Activated T-helper 1 cell treated with anti-CD3 and anti-CD28 coated beads, Interleukin-12 subunit alpha, Interleukin-12 subunit beta, Interleukin-2, Interleukin-4 antibody, amounts not matched to agents 30 ng/mL and 10 ng/mL and 1 ng/mL, durations not matched to agents 14 hours and 24 hours and 36 hours (primary cell): ENCODE measurements at regions of chr19 and their contacts with region 1.

Region 1: DNA sequence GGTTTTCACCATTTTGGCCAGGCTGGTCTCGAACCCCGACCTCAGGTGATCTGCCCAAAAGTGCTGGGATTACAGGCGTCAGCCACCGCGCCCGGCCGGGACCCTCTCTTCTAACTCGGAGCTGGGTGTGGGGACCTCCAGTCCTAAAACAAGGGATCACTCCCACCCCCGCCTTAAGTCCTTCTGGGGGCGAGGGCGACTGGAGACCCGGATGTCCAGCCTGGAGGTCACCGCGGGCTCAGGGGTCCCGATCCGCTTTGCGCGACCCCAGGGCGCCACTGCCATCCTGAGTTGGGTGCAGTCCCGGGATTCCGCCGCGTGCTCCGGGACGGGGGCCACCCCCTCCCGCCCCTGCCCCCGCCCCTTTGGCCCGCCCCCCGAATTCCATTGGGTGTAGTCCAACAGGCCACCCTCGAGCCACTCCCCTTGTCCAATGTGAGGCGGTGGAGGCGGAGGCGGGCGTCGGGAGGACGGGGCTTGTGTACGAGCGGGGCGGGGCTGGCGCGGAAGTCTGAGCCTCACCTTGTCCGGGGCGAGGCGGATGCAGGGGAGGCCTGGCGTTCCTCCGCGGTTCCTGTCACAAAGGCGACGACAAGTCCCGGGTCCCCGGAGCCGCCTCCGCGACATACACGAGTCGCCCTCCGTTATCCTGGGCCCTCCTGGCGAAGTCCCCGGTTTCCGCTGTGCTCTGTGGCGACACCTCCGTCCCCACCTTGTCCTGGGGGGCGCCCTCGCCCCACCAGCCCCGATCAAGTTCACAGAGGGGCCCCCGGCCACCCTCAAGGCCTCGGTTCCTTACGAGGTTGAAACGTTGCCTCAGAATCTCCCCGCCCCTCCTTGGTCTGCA is 1.0 kb downstream of the LDLR start:
- DNase-seq: peak; percentile 97
- H3K4me3 Mint-ChIP-seq: peak overlapping the region; percentile 98
- H3K27ac Mint-ChIP-seq: peak overlapping the region; percentile 99
- H3K4me1 Mint-ChIP-seq: peaks cover 45% of the 10 kb centered on the region
- H3K27me3 Mint-ChIP-seq: no peaks in the 10 kb centered on the region

Region 2: DNA sequence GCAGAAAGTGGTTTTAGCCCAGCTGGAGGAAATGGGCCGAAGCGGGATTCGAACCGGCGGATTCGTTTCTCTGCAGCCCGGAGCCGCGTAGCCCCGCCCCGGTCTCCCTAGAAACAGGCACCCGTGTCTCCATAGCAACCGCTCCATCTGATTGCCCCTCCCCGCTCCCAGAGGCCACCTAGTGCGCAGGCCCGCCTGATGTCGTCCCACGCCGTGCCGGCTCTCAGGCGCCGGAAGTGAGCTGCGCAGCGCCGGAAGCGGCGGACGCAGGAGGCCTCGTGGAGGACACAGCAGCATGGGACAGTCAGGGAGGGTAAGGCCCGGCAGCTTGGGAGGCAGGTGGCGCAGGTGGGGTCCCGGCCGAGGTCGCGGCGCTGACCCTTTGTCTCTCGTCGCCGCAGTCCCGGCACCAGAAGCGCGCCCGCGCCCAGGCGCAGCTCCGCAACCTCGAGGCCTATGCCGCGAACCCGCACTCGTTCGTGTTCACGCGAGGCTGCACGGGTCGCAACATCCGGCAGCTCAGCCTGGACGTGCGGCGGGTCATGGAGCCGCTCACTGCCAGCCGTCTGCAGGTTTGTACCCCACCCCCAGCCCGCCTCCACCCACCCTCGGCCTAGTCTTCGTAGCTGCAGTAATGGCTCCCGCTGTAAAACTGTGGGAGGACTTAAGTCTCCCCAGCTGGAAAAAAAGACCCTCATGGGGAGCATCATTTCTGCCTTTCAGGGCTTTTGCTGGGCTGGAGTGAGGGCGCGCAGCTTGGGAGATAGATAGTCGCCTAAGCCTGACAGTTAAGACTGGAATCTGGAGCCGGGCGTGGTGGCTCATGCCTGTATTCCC is 984.0 kb before region 1 on chr19 and contains the start of gene PPAN:
- intact Hi-C with region 1: loop called (anchors 10 kb)
- DNase-seq: peak; percentile 97
- H3K4me3 Mint-ChIP-seq: peak within 1 kb of the TSS; percentile 97
- H3K27ac Mint-ChIP-seq: peak within 1 kb of the TSS; percentile 99
- H3K4me1 Mint-ChIP-seq: peaks cover 60% of the 10 kb centered on the region
- H3K27me3 Mint-ChIP-seq: peaks cover 1% of the 10 kb centered on the region
- total RNA-seq, gene PPAN: 234 and 250 TPM in 2 replicates

Region 3: GRCh38 chr19:10533646-10534386 is 556.5 kb before region 1 on chr19:
- intact Hi-C with region 1: no loop called
- DNase-seq: no peak
- H3K4me3 Mint-ChIP-seq: no peak overlapping the region
- H3K27ac Mint-ChIP-seq: no peak overlapping the region
- H3K4me1 Mint-ChIP-seq: no peaks in the 10 kb centered on the region
- H3K27me3 Mint-ChIP-seq: peaks cover 26% of the 10 kb centered on the region

Region 4: GRCh38 chr19:10717356-10718204 is 372.7 kb before region 1 on chr19 and contains the start of gene DNM2:
- intact Hi-C with region 1: loop called (anchors 10 kb)
- DNase-seq: peak; percentile 99
- H3K4me3 Mint-ChIP-seq: peak within 1 kb of the TSS; percentile 98
- H3K27ac Mint-ChIP-seq: peak within 1 kb of the TSS; percentile 88
- H3K4me1 Mint-ChIP-seq: peaks cover 29% of the 10 kb centered on the region
- H3K27me3 Mint-ChIP-seq: no peaks in the 10 kb centered on the region
- total RNA-seq, gene DNM2: 236 and 240 TPM in 2 replicates

Region 5: GRCh38 chr19:10870955-10871603 is 219.2 kb before region 1 on chr19 and contains the start of gene CARM1:
- intact Hi-C with region 1: loop called (anchors 1 kb)
- DNase-seq: peak; percentile 98
- H3K4me3 Mint-ChIP-seq: peak within 1 kb of the TSS; percentile 88
- H3K27ac Mint-ChIP-seq: peak within 1 kb of the TSS; percentile 93
- H3K4me1 Mint-ChIP-seq: peaks cover 37% of the 10 kb centered on the region
- H3K27me3 Mint-ChIP-seq: no peaks in the 10 kb centered on the region
- total RNA-seq, gene CARM1: 85.9 and 88.0 TPM in 2 replicates

Region 6: DNA sequence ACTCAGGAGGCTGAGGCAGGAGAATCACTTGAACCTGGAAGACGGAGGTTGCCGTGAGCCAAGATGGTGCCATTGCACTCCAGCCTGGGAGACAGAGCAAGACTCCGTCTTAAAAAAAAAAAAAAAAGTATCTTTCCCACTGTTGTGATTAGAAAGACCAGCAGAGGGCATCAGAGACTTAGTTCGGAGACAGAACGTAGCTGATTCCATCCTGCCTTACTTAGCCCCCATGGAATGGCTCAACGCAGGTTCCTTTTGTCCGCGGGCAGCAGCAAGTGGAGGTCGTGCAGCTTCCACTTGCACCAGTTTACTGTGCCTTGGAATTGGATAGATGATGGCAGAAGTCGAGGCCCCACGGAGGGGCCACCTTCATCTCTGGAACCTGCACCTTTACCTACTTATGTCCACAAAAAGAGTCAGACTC is 153.6 kb before region 1 on chr19:
- intact Hi-C with region 1: loop called (anchors 2 kb)
- DNase-seq: peak; percentile 20
- H3K4me3 Mint-ChIP-seq: no peak overlapping the region
- H3K27ac Mint-ChIP-seq: no peak overlapping the region
- H3K4me1 Mint-ChIP-seq: peaks cover 5% of the 10 kb centered on the region
- H3K27me3 Mint-ChIP-seq: no peaks in the 10 kb centered on the region

Region 7: GRCh38 chr19:11035441-11036377 is 54.6 kb before region 1 on chr19:
- intact Hi-C with region 1: loop called (anchors 1 kb)
- DNase-seq: peak; percentile 74
- H3K4me3 Mint-ChIP-seq: no peak overlapping the region
- H3K27ac Mint-ChIP-seq: no peak overlapping the region
- H3K4me1 Mint-ChIP-seq: no peaks in the 10 kb centered on the region
- H3K27me3 Mint-ChIP-seq: no peaks in the 10 kb centered on the region

Region 8: DNA sequence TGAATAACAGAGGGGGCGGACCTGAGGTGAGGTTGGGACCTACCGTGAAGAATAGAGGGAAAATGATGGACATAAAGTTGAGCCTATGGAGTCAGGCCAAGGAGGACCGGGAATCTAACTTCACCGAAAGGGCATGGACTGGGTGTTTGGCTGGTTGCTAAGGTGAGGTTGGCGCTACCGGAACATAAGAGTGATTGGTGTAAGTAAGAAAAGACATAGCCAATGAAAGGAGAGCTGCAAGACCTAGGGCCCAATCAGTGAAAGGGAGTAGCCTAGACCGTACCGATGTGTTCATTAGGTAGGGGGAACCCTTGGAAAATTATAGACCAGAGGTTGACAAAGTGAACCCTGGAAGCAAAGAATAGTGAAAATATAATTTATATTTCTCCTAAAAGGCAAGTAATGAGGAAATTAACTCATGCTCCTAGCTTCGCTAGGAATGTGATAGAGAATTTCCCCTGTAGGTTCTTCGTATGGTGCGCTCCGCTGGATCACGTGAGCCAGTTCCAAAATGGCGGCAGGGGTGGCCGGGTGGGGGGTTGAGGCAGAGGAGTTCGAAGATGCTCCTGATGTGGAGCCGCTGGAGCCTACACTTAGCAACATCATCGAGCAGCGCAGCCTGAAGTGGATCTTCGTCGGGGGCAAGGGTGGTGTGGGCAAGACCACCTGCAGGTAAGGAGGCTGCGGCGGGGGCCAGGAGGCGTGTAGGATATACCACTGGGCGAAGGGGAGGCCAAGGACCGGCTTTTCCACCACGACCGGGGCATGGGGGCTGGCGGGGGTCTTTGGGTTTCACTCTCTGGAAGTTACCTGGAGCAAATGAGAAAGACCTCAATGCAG is 1646.9 kb after region 1 on chr19 and contains the start of gene GET3:
- intact Hi-C with region 1: loop called (anchors 10 kb)
- DNase-seq: peak; percentile 75
- H3K4me3 Mint-ChIP-seq: peak within 1 kb of the TSS; percentile 99
- H3K27ac Mint-ChIP-seq: peak within 1 kb of the TSS; percentile 83
- H3K4me1 Mint-ChIP-seq: peaks cover 28% of the 10 kb centered on the region
- H3K27me3 Mint-ChIP-seq: no peaks in the 10 kb centered on the region
- total RNA-seq, gene GET3: 68.0 and 70.9 TPM in 2 replicates